K562 (cell line): ENCODE measurements at regions of chr9 and their contacts with region 1.

Region 1: GRCh38 chr9:135440620-135441019 is 39.0 kb upstream of the PPP1R26 start:
- DNase-seq: peak in 2 of 4 experiments; percentile 43 to 91
- ATAC-seq: peak; percentile 76
- H3K4me3 ChIP-seq: peak overlapping the region; percentile 18; the same call in 1 of the 2 replicates
- H3K27ac ChIP-seq: peak overlapping the region; percentile 83
- H3K4me1 ChIP-seq: peaks cover 18 to 32% of the 10 kb centered on the region in 2 experiments
- H3K27me3 ChIP-seq: no peaks in the 10 kb centered on the region
- CTCF ChIP-seq: peak; percentile 85 to 99 (median 99)
- EP300 ChIP-seq: peak; percentile 45; the same call in 1 of the 2 replicates
- POLR2A ChIP-seq: no peak
- RAD21 ChIP-seq: peak; percentile 63 to 80

Region 2: DNA sequence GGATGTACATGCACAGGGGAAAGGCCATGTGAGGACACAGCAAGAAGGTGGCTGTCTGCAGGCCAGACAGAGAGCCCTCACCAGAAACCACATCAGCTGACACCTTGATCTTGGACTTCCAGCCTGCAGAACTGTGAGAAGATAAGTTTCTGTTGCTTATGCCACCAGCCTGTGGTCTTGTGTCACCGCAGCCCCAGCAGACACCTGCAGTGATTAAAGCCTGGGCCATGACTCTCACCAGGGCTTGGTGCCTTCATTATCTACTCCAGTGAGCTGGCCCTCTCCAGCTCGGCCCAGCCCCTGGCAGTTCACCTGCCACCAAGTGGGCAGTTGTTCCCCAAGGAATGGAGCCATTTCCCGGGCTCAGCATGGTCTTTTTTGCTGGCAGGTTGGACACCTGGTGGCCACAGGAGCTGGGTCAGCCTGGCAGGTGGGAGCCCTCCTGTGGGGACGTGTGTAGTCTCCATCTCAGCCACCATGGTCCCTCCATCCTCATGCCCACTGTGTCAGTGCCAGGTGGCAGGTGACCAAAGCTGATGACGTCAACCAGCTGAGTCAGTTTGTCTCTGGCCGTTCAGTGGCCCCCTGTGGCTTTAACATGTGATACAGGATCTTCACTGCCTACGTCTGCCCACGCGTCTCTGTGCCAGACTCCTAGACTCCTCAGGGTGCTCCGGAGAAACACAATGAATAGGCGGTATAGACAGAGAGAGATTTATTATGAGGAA is 60.9 kb before region 1 on chr9:
- CTCF ChIA-PET with region 1: no interaction called
- POLR2A ChIA-PET with region 1: no interaction called
- in situ Hi-C with region 1: no loop called
- intact Hi-C with region 1: no loop called
- DNase-seq: peak in 1 of 4 experiments; percentile 10
- ATAC-seq: peak; percentile 21; the same call in 1 of the 3 replicates
- H3K4me3 ChIP-seq: no peak overlapping the region
- H3K27ac ChIP-seq: no peak overlapping the region
- H3K4me1 ChIP-seq: peaks cover 0 to 4% of the 10 kb centered on the region in 2 experiments; a peak in 2 of 5 replicates
- H3K27me3 ChIP-seq: peaks cover 7 to 83% of the 10 kb centered on the region in 2 experiments; a peak in 3 of 5 replicates
- CTCF ChIP-seq: no peak
- EP300 ChIP-seq: no peak
- POLR2A ChIP-seq: no peak
- RAD21 ChIP-seq: no peak

Region 3: GRCh38 chr9:135500525-135501358 is 60.1 kb after region 1 on chr9 and contains the start of gene MRPS2:
- CTCF ChIA-PET with region 1: no interaction called
- POLR2A ChIA-PET with region 1: interaction called, 3 read pairs
- in situ Hi-C with region 1: no loop called
- intact Hi-C with region 1: loop called (anchors 2 kb)
- DNase-seq: peak; percentile 88 to 94 (median 90)
- ATAC-seq: peak; percentile 95
- H3K4me3 ChIP-seq: peak within 1 kb of the TSS; percentile 78
- H3K27ac ChIP-seq: peak within 1 kb of the TSS; percentile 90
- H3K4me1 ChIP-seq: peaks cover 11 to 70% of the 10 kb centered on the region in 2 experiments
- H3K27me3 ChIP-seq: no peaks in the 10 kb centered on the region
- CTCF ChIP-seq: peak; percentile 84 to 93 (median 86)
- EP300 ChIP-seq: no peak
- POLR2A ChIP-seq: peak; percentile 88
- RAD21 ChIP-seq: peak; percentile 23 to 41; a peak in 3 of 4 replicates
- polyA plus RNA-seq, gene MRPS2: 8.0 to 10.9 TPM